ENCODE measurements at regions of chr2 and their contacts with region 1.

Region 1: GRCh38 chr2:143110758-143111428 is 18.3 kb upstream of the ARHGAP15 start:
- DNase-seq: peak; percentile 43 to 59
- H3K4me3 ChIP-seq: no peak overlapping the region
- H3K4me3 Mint-ChIP-seq: no peak overlapping the region
- H3K27ac Mint-ChIP-seq: no peak overlapping the region
- H3K4me1 ChIP-seq: no peaks in the 10 kb centered on the region
- H3K4me1 Mint-ChIP-seq: no peaks in the 10 kb centered on the region
- H3K27me3 ChIP-seq: no peaks in the 10 kb centered on the region
- H3K27me3 Mint-ChIP-seq: peaks cover 8% of the 10 kb centered on the region
- CTCF ChIP-seq: peak; percentile 66 to 72

Region 2: DNA sequence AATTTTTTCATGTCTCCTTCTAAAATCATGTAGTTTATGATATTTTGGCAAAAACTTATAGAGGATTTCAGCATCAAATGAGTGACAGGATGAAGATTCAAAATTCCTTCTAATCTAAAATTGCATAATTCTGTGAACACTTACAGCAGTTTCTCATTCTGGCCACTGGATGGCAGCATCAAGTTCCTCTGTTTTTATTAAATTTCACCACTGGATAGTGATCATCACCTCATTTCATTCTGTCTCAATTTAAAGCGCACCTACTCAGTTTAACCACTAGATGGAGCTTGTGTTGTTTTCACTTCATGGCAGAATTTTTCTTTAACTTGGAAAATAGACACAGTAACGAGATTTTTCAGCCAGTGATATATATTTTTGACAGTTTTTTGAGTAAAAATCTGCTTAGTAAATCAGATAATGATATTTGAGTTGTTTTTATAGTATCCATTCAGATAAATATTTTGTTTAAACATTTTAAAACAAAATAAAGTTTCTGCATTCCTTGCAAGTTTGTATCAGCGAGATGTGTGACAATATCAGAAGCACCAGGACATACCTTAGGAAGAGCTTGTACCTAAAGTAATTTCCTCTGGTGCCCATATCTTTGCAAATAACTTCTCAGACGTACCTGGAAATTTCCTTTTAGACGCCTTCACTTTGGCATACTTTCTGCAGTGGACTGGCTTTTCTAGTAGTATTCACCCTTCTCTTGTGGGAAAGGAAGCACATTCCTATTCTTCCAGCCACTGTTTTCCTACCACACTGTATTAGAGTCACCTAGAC is 76.4 kb before region 1 on chr2:
- CTCF ChIA-PET with region 1: interaction called, 11 read pairs
- POLR2A ChIA-PET with region 1: no interaction called
- intact Hi-C with region 1: no loop called
- DNase-seq: peak; percentile 61 to 69
- H3K4me3 ChIP-seq: no peak overlapping the region
- H3K4me3 Mint-ChIP-seq: no peak overlapping the region
- H3K27ac Mint-ChIP-seq: no peak overlapping the region
- H3K4me1 ChIP-seq: peaks cover 12% of the 10 kb centered on the region
- H3K4me1 Mint-ChIP-seq: peaks cover 10% of the 10 kb centered on the region
- H3K27me3 ChIP-seq: no peaks in the 10 kb centered on the region
- H3K27me3 Mint-ChIP-seq: no peaks in the 10 kb centered on the region
- CTCF ChIP-seq: peak; percentile 93

Region 3: DNA sequence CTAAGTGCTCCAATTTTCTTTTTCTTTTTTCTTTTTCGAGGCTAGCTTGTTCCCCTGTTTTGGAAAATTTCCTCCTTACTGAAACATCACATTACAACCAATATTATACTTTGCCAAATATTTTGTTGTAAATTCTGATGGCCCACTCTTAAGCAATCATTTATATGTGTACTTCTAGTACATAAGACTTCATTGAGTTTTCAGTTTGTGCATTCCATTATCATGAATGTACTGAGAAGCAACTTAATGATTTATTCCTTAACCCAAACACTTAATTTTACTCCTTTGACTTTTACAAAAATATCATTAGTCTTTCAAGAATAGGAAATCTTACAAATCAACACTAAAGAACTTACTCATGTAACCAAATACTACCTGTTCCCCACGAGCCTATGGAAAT is 260.7 kb after region 1 on chr2:
- CTCF ChIA-PET with region 1: no interaction called
- POLR2A ChIA-PET with region 1: no interaction called
- intact Hi-C with region 1: no loop called
- DNase-seq: no peak
- H3K4me3 ChIP-seq: no peak overlapping the region
- H3K4me3 Mint-ChIP-seq: no peak overlapping the region
- H3K27ac Mint-ChIP-seq: no peak overlapping the region
- H3K4me1 ChIP-seq: no peaks in the 10 kb centered on the region
- H3K4me1 Mint-ChIP-seq: no peaks in the 10 kb centered on the region
- H3K27me3 ChIP-seq: no peaks in the 10 kb centered on the region
- H3K27me3 Mint-ChIP-seq: peaks cover 4% of the 10 kb centered on the region
- CTCF ChIP-seq: no peak

Measured in Caco-2 (cell line).